ENCODE measurements at regions of chr2 and their contacts with region 1.

Region 1: GRCh38 chr2:214809751-214810564 is 475 bp upstream of the BARD1 start:
- DNase-seq: peak; percentile 98
- H3K4me3 ChIP-seq: peak overlapping the region; percentile 97
- H3K27ac ChIP-seq: peak overlapping the region; percentile 98
- H3K4me1 ChIP-seq: peaks cover 26% of the 10 kb centered on the region
- CTCF ChIP-seq: no peak

Region 2: GRCh38 chr2:213232649-213233437 is 1577.1 kb before region 1 on chr2:
- CTCF ChIA-PET with region 1: no interaction called
- POLR2A ChIA-PET with region 1: no interaction called
- intact Hi-C with region 1: loop called (anchors 5 kb)
- DNase-seq: peak; percentile 99
- H3K4me3 ChIP-seq: peak overlapping the region; percentile 56
- H3K27ac ChIP-seq: peak overlapping the region; percentile 97
- H3K4me1 ChIP-seq: peaks cover 98% of the 10 kb centered on the region
- CTCF ChIP-seq: no peak

Region 3: GRCh38 chr2:215002500-215002899 is 192.5 kb after region 1 on chr2:
- CTCF ChIA-PET with region 1: no interaction called
- POLR2A ChIA-PET with region 1: no interaction called
- intact Hi-C with region 1: loop called (anchors 5 kb)
- DNase-seq: peak; percentile 74
- H3K4me3 ChIP-seq: no peak overlapping the region
- H3K27ac ChIP-seq: no peak overlapping the region
- H3K4me1 ChIP-seq: peaks cover 14% of the 10 kb centered on the region
- CTCF ChIP-seq: peak; percentile 91

Region 4: GRCh38 chr2:216108967-216109921 is 1299.3 kb after region 1 on chr2 and contains the start of gene XRCC5:
- CTCF ChIA-PET with region 1: no interaction called
- POLR2A ChIA-PET with region 1: no interaction called
- intact Hi-C with region 1: loop called (anchors 10 kb)
- DNase-seq: peak; percentile 98
- H3K4me3 ChIP-seq: peak within 1 kb of the TSS; percentile 91
- H3K27ac ChIP-seq: peak within 1 kb of the TSS; percentile 74
- H3K4me1 ChIP-seq: peaks cover 48% of the 10 kb centered on the region
- CTCF ChIP-seq: no peak
- total RNA-seq, gene XRCC5: 174 and 180 TPM in 2 replicates

Measured in OCI-LY7 (cell line).